CD14-positive monocyte (primary cell): ENCODE measurements at regions of chr5 and their contacts with region 1.

Region 1: DNA sequence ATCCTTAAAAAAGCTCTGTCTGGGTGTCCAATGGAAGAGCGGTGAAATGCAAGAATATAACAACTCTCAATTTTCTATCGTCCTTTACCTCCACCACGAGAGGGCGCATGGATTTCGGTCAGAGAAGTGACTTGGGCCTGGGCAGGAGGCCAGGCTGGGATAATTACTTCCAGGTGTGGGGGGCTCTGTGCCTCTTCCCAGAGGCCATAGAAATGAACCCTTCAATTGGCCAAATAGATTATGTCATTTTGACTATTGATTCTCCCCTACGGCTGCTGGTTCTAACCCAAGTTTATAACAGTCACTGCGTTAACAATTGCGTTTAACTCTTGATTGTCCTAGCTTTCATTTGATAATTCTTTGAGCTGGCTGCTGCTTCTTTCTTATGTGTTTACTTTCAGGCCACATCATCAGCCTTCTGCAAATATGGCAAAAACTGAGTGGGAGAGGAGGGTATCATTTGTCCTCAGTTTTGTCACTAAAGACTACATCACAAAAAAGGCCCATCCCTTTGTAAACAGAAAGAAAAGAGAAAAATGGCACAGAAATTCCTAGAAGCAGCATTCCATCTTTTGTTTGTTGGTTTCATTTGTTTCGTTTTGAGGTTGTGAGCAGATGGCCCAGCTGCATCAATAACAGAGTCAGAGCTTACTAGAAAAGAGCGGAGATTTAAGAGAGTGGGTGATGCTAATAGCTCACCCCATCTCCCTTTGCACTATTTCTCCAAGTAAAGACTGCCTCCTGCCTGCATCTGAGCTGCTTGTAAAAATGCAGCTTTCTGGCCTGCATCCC is 45.4 kb upstream of the ZFR start:
- DNase-seq: peak; percentile 56 to 70 (median 61)
- H3K4me3 ChIP-seq: no peak overlapping the region
- H3K4me3 Mint-ChIP-seq: no peak overlapping the region
- H3K27ac ChIP-seq: no peak overlapping the region
- H3K27ac Mint-ChIP-seq: no peak overlapping the region
- H3K4me1 ChIP-seq: no peaks in the 10 kb centered on the region
- H3K4me1 Mint-ChIP-seq: no peaks in the 10 kb centered on the region
- H3K27me3 ChIP-seq: no peaks in the 10 kb centered on the region
- H3K27me3 Mint-ChIP-seq: peaks cover 0 to 3% (median 2%) of the 10 kb centered on the region in 3 donors
- CTCF ChIP-seq: peak; percentile 90

Region 2: DNA sequence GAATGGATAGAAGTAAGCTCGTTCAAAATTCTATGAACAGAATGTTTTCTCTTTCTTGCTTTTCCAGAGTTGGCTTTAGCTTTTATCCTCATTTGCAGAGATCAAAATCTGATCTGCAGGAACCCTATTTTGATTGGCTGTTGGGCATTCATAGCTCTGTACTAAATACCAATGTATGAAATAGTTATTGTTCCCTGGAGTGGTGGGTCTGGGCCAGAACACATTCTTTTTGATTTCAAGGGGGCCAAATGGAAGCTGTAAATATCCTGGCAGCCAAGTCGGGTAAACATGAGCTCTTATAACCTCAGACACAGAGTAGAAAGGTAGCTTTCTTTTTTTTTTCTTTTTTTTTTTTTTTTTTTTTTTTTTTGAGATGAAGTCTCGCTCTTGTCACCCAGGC is 609.5 kb before region 1 on chr5:
- intact Hi-C with region 1: no loop called
- DNase-seq: no peak
- H3K4me3 ChIP-seq: no peak overlapping the region
- H3K4me3 Mint-ChIP-seq: no peak overlapping the region
- H3K27ac ChIP-seq: no peak overlapping the region
- H3K27ac Mint-ChIP-seq: no peak overlapping the region
- H3K4me1 ChIP-seq: no peaks in the 10 kb centered on the region
- H3K4me1 Mint-ChIP-seq: no peaks in the 10 kb centered on the region
- H3K27me3 ChIP-seq: no peaks in the 10 kb centered on the region
- H3K27me3 Mint-ChIP-seq: peaks cover 0 to 9% (median 2%) of the 10 kb centered on the region in 3 donors
- CTCF ChIP-seq: no peak

Region 3: DNA sequence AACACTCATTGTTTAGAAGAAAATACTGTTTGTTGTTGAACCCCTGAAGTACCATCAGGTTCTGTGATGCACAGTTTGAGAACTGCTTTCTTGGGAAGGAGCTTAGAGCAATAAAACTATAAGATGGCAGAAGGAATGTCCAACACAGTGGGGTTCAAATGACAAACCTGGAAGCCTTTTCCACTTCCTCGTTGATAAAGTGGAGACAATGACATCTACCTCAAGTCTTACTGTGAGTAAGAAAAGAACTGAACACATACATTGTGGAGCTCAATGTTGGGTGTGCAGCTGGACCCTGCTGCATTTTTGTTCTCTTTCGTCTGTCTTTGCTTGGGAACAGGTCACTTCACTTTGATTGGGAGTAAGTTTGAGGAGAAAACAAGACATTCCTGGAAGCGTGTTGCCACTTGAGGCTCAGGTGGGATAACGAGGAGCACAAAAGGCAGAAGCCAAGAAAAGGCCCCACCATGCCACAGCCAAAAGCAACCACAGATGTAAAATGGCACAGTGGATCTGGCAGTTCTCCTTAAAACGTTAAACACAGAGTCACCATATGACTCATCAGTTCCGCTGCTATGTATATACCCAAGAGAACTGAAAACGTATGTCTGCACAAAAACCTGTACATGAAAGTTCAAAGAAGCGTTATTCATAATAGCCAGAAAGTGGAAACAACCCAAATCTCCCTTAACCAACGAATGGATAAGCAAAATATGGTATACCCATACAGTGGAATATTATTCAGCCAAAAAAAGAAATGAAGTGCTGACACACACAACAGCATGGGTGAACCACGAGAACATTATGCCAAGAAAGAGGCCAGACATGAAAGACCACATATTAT is 52.5 kb after region 1 on chr5:
- intact Hi-C with region 1: loop called in 1 of 2 experiments (anchors 10 kb)
- DNase-seq: peak; percentile 52 to 80 (median 71)
- H3K4me3 ChIP-seq: no peak overlapping the region
- H3K4me3 Mint-ChIP-seq: peak overlapping the region in 1 of 2 donors; percentile 46
- H3K27ac ChIP-seq: no peak overlapping the region
- H3K27ac Mint-ChIP-seq: peak overlapping the region in 6 of 7 donors; percentile 38 to 92 (median 64)
- H3K4me1 ChIP-seq: peaks cover 55 to 58% of the 10 kb centered on the region in 2 donors
- H3K4me1 Mint-ChIP-seq: peaks cover 49% of the 10 kb centered on the region
- H3K27me3 ChIP-seq: no peaks in the 10 kb centered on the region
- H3K27me3 Mint-ChIP-seq: peaks cover 0 to 3% (median 1%) of the 10 kb centered on the region in 3 donors
- CTCF ChIP-seq: no peak

Region 4: GRCh38 chr5:32613050-32613672 is 123.2 kb after region 1 on chr5:
- intact Hi-C with region 1: loop called (anchors 5 kb)
- DNase-seq: peak; percentile 74 to 81 (median 79)
- H3K4me3 ChIP-seq: no peak overlapping the region
- H3K4me3 Mint-ChIP-seq: no peak overlapping the region
- H3K27ac ChIP-seq: no peak overlapping the region
- H3K27ac Mint-ChIP-seq: no peak overlapping the region
- H3K4me1 ChIP-seq: no peaks in the 10 kb centered on the region
- H3K4me1 Mint-ChIP-seq: peaks cover 2% of the 10 kb centered on the region
- H3K27me3 ChIP-seq: no peaks in the 10 kb centered on the region
- H3K27me3 Mint-ChIP-seq: peaks cover 0 to 2% (median 0%) of the 10 kb centered on the region in 3 donors
- CTCF ChIP-seq: peak; percentile 96

Region 5: DNA sequence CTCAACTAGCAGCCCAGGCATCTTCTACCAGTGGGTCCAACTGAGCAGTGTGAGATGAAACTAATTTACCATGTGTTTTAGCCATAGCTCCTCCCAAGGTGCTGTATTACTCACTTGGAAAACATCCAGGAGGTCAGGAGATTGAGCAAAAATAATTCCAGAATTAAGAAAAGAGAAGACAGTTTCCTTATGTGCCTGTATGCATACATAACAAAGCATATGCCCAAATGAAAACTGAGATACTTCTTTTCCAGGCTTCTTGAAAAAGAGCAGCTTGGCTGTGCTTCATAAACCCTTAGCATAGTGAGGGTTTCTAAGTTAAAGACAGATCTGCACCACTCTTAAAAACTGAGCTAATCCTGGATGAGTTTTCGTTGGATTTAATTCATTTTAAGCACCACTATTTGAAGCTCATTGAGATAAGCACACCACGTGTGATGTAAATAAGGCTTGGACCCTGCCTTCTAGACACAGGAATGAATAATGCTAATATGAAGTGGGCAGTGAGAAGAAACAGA is 1282.5 kb after region 1 on chr5:
- intact Hi-C with region 1: no loop called
- DNase-seq: no peak
- H3K4me3 ChIP-seq: no peak overlapping the region
- H3K4me3 Mint-ChIP-seq: no peak overlapping the region
- H3K27ac ChIP-seq: no peak overlapping the region
- H3K27ac Mint-ChIP-seq: no peak overlapping the region
- H3K4me1 ChIP-seq: no peaks in the 10 kb centered on the region
- H3K4me1 Mint-ChIP-seq: no peaks in the 10 kb centered on the region
- H3K27me3 ChIP-seq: no peaks in the 10 kb centered on the region
- H3K27me3 Mint-ChIP-seq: peaks cover 0 to 3% (median 2%) of the 10 kb centered on the region in 3 donors
- CTCF ChIP-seq: no peak